Activated naive CD8-positive, alpha-beta T cell treated with anti-CD3 and anti-CD28 coated beads, Interleukin-2, amount 10 ng/mL, durations not matched to agents 7 days and 5 days (primary cell): ENCODE measurements at regions of chr16 and their contacts with region 1.

Region 1: DNA sequence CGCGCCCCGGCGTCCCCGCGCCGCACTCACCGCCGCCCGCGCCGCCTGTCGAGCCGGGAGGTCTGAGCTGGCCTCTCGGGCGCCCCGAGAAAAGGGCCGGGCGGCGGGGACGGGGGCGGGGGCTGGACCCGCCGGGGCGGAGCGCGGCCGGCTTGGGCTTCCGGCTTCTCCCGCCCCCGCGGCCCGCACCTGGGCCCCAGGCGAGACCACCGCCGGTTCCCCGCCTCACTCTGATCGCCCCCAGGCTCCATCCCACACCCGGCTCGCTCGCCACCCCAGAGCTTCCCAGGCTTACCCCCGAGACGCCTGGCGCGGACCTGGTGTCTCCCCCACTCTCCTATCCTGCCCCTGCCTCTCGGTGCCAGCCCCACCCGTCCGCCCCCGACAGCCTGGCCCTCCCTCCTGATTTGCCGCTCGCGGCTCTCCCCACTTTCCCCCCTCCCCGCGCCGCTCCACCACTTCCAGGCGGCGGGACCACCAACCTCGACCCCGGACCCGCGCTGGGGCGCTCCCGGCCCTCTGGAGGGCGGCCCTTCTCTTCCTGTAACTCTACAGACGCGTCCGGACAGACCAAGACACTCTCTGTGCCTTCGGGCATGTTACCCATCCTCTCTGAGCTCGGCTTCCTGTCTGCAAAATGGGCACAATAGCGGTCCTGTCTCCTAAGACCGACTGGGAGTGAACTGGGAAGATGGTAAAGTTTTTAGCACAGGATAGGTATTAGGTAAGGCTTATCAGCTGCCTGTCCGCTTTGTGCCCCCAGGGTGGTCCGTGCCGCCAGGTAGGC is at the start of gene LITAF:
- DNase-seq: peak; percentile 80
- ATAC-seq: peak; percentile 71
- H3K4me3 Mint-ChIP-seq: peak within 1 kb of the TSS; percentile 94
- H3K27ac Mint-ChIP-seq: peak within 1 kb of the TSS; percentile 97
- H3K4me1 Mint-ChIP-seq: peaks cover 37% of the 10 kb centered on the region
- H3K27me3 Mint-ChIP-seq: peaks cover 10% of the 10 kb centered on the region
- total RNA-seq, gene LITAF: 109 TPM

Region 2: GRCh38 chr16:11497851-11498289 is 89.2 kb before region 1 on chr16:
- POLR2A ChIA-PET with region 1: no interaction called
- DNase-seq: no peak
- ATAC-seq: no peak
- H3K4me3 Mint-ChIP-seq: no peak overlapping the region
- H3K27ac Mint-ChIP-seq: peak overlapping the region; percentile 47
- H3K4me1 Mint-ChIP-seq: peaks cover 19% of the 10 kb centered on the region
- H3K27me3 Mint-ChIP-seq: no peaks in the 10 kb centered on the region

Region 3: DNA sequence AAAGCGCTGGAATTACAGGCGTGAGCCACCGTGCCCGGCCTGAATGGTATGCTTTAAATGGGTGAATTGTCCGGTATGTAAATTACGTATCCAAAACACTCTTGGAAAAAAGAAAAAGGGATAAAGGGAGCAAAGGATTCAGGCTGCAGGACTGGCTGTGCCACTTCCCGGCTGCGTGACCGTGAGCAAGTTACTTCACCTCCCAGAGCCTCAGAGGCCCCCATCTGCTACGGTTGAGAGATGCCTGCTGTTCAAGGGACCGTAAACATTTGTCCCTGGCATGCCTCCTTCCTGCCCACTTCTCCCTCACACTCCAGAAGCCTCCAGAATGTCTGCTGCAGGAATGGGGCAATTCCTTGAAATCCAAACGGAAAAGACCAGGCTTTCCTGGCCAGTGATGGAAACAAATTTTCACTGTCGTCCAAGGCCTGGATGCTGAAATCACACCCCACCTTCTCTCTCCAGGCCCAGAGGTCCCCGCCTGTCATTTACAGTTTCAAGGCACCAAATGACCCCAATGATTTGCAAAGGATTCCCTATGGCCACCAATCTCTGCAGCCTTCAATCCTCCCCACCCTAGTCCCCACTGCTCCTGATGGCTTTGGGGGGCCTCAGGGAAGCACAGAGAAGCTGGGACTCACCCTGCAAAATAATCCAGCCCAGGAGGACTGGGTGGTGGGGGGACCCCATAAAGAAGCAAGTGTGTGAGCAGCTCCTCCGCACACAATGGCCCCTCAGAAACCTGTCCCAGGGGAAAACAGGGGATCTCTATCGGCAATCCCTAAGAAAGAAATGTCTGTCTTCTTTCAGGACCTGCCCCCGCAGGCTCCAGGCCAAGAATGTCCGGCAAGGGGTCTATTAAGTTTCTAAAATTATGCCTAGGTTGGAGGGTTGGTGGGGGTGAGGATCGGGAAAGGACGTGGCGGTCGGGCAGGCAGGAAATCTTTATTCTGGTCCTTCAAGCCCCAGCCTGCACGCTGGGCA is 22.7 kb after region 1 on chr16:
- POLR2A ChIA-PET with region 1: interaction called, 11 read pairs
- DNase-seq: no peak
- ATAC-seq: no peak
- H3K4me3 Mint-ChIP-seq: no peak overlapping the region
- H3K27ac Mint-ChIP-seq: no peak overlapping the region
- H3K4me1 Mint-ChIP-seq: peaks cover 8% of the 10 kb centered on the region
- H3K27me3 Mint-ChIP-seq: peaks cover 12% of the 10 kb centered on the region

Region 4: DNA sequence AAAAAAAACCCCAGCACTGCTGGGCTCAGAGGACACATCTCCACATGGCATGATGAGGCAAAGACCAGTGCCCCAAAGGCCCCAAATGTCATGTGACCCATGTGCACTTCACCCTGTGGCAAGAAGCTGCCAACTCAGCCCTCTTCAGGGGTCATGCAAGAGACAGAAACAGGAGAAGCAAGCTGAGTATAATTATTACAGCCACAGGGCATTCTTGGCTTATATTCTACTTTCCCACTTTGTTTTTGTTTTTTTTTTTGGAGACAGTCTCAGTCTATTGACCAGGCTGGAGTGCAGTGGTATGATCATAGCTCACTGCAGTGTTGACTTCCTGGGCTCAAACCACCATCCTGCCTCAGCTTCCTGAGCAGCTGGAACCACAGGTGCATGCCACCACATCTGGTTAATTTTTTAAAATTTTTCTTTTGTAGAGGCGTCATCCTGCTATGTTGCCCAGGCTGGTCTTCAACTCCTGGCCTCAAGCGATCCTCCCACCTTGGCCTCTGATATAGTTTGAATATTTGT is 32.3 kb after region 1 on chr16:
- POLR2A ChIA-PET with region 1: interaction called, 20 read pairs
- DNase-seq: peak; percentile 49
- ATAC-seq: peak; percentile 61
- H3K4me3 Mint-ChIP-seq: peak overlapping the region; percentile 54
- H3K27ac Mint-ChIP-seq: peak overlapping the region; percentile 90
- H3K4me1 Mint-ChIP-seq: peaks cover 38% of the 10 kb centered on the region
- H3K27me3 Mint-ChIP-seq: no peaks in the 10 kb centered on the region